ENCODE measurements at regions of chr6 and their contacts with region 1.

Region 1: GRCh38 chr6:225121-225721 is 67.1 kb upstream of the DUSP22 start:
- DNase-seq: peak; percentile 88
- ATAC-seq: peak; percentile 83
- H3K4me3 ChIP-seq: peak overlapping the region; percentile 26; the same call in 1 of the 2 replicates
- H3K27ac ChIP-seq: peak overlapping the region; percentile 97
- H3K4me1 ChIP-seq: peaks cover 59% of the 10 kb centered on the region
- H3K27me3 ChIP-seq: no peaks in the 10 kb centered on the region
- CTCF ChIP-seq: no peak

Region 2: GRCh38 chr6:235763-236360 is 10.6 kb after region 1 on chr6:
- CTCF ChIA-PET with region 1: interaction called, 20 read pairs
- POLR2A ChIA-PET with region 1: no interaction called
- intact Hi-C with region 1: no loop called
- DNase-seq: no peak
- ATAC-seq: no peak
- H3K4me3 ChIP-seq: no peak overlapping the region; the same call in 1 of the 2 replicates
- H3K27ac ChIP-seq: no peak overlapping the region
- H3K4me1 ChIP-seq: 0 out of 2 replicates have a peak, but pooled peaks cover 3% of the 10 kb centered on the region
- H3K27me3 ChIP-seq: no peaks in the 10 kb centered on the region
- CTCF ChIP-seq: no peak

Region 3: DNA sequence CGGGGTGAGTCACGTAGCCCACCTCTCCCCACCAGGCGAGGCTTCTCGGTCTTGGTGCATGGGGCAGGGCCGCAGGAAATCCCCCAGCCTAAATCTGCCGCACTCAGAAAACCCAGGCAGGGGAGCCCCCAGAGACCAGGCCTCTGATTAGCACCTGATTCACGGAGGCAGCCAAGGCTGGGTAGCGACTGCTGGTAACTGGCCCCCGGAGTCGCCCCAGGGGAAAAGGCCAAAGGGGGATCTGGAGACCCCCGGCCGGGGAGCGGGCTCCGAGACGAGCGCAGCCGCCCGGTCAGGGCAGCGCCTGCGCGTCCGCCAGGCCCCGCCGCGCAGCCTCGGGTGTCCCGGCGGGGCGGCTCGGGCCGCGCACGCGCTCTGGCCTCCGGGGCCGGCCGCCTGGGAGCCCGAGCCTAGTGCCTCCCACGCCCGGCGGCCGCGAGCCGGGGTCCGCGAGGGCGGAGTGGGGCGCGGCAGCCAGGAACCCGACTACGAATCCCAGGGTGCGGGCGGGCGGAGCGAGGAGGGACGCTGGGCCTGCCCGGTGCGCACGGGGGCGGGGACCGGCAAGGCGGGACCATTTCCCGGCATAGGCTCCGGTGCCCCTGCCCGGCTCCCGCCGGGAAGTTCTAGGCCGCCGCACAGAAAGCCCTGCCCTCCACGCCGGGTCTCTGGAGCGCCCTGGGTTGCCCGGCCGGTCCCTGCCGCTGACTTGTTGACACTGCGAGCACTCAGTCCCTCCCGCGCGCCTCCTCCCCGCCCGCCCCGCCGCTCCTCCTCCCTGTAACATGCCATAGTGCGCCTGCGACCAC is 66.7 kb after region 1 on chr6 and contains the start of gene DUSP22:
- CTCF ChIA-PET with region 1: no interaction called
- POLR2A ChIA-PET with region 1: no interaction called
- intact Hi-C with region 1: loop called (anchors 2 kb)
- DNase-seq: peak; percentile 85
- ATAC-seq: peak; percentile 84
- H3K4me3 ChIP-seq: peak within 1 kb of the TSS; percentile 74
- H3K27ac ChIP-seq: peak within 1 kb of the TSS; percentile 52
- H3K4me1 ChIP-seq: peaks cover 15% of the 10 kb centered on the region
- H3K27me3 ChIP-seq: no peaks in the 10 kb centered on the region
- CTCF ChIP-seq: no peak
- total RNA-seq, gene DUSP22: 26.3 and 37.8 TPM in 2 replicates

Measured in PC-3 (cell line).